PC-9 (cell line): ENCODE measurements at regions of chr1 and their contacts with region 1.

Region 1: GRCh38 chr1:52348704-52349300 is 17.2 kb downstream of the CC2D1B start:
- DNase-seq: peak in 1 of 2 experiments; percentile 23
- H3K4me3 ChIP-seq: no peak overlapping the region
- H3K27ac ChIP-seq: no peak overlapping the region
- H3K4me1 ChIP-seq: no peaks in the 10 kb centered on the region
- H3K27me3 ChIP-seq: no peaks in the 10 kb centered on the region
- CTCF ChIP-seq: 0 out of 2 replicates have a peak, but pooled peaks have one; percentile 17

Region 2: GRCh38 chr1:52296345-52296744 is 52.5 kb before region 1 on chr1:
- CTCF ChIA-PET with region 1: interaction called, 12 read pairs
- POLR2A ChIA-PET with region 1: no interaction called
- intact Hi-C with region 1: no loop called
- DNase-seq: peak; percentile 3 to 57
- H3K4me3 ChIP-seq: no peak overlapping the region
- H3K27ac ChIP-seq: no peak overlapping the region
- H3K4me1 ChIP-seq: no peaks in the 10 kb centered on the region
- H3K27me3 ChIP-seq: no peaks in the 10 kb centered on the region
- CTCF ChIP-seq: peak; percentile 79

Region 3: GRCh38 chr1:52365071-52365745 is 16.4 kb after region 1 on chr1:
- CTCF ChIA-PET with region 1: no interaction called
- POLR2A ChIA-PET with region 1: no interaction called
- intact Hi-C with region 1: no loop called
- DNase-seq: peak; percentile 78 to 81
- H3K4me3 ChIP-seq: peak overlapping the region; percentile 92
- H3K27ac ChIP-seq: peak overlapping the region; percentile 86
- H3K4me1 ChIP-seq: peaks cover 15% of the 10 kb centered on the region
- H3K27me3 ChIP-seq: no peaks in the 10 kb centered on the region
- CTCF ChIP-seq: no peak